Activated CD4-positive, alpha-beta T cell treated with anti-CD3 and anti-CD28 coated beads for 36 hours (primary cell): ENCODE measurements at regions of chr14 and their contacts with region 1.

Region 1: GRCh38 chr14:62126879-62127478 is 364.8 kb downstream of the SNAPC1 start:
- DNase-seq: no peak
- ATAC-seq: peak; percentile 61
- H3K4me3 Mint-ChIP-seq: no peak overlapping the region
- H3K27ac Mint-ChIP-seq: no peak overlapping the region
- H3K4me1 Mint-ChIP-seq: no peaks in the 10 kb centered on the region
- H3K27me3 Mint-ChIP-seq: peaks cover 30% of the 10 kb centered on the region

Region 2: GRCh38 chr14:61296719-61297502 is 830.1 kb before region 1 on chr14:
- CTCF ChIA-PET with region 1: no interaction called
- POLR2A ChIA-PET with region 1: no interaction called
- intact Hi-C with region 1: loop called in 1 of 2 experiments (anchors 10 kb)
- DNase-seq: no peak
- ATAC-seq: peak; percentile 67
- H3K4me3 Mint-ChIP-seq: no peak overlapping the region
- H3K27ac Mint-ChIP-seq: peak overlapping the region; percentile 29
- H3K4me1 Mint-ChIP-seq: peaks cover 54% of the 10 kb centered on the region
- H3K27me3 Mint-ChIP-seq: no peaks in the 10 kb centered on the region

Region 3: GRCh38 chr14:61860294-61860918 is 266.6 kb before region 1 on chr14:
- CTCF ChIA-PET with region 1: interaction called, 25 read pairs
- POLR2A ChIA-PET with region 1: no interaction called
- intact Hi-C with region 1: loop called in 1 of 2 experiments (anchors 1 kb)
- DNase-seq: peak; percentile 86
- ATAC-seq: peak; percentile 100
- H3K4me3 Mint-ChIP-seq: no peak overlapping the region
- H3K27ac Mint-ChIP-seq: no peak overlapping the region
- H3K4me1 Mint-ChIP-seq: peaks cover 5% of the 10 kb centered on the region
- H3K27me3 Mint-ChIP-seq: peaks cover 14% of the 10 kb centered on the region

Region 4: DNA sequence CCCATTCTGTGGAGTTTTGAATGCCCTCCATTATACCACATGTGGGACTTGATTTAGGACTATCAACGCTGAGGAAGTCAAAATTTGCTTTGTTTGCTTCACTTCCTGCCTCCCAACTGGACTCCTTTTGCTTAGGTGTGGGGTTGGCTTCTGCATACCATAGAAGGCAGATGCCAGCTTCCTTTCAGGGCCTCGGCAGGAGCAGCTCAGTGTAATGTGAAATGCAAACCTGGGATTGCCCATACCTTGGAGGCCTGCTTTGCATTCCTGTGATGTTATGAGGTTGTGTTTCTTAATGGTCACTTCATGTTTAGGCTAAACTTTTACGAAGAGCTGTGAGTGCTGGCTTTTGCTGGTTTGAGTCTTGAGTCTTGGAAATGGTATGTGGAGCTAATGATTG is 222.8 kb before region 1 on chr14:
- CTCF ChIA-PET with region 1: interaction called, 10 read pairs
- POLR2A ChIA-PET with region 1: no interaction called
- intact Hi-C with region 1: no loop called
- DNase-seq: no peak
- ATAC-seq: no peak
- H3K4me3 Mint-ChIP-seq: no peak overlapping the region
- H3K27ac Mint-ChIP-seq: no peak overlapping the region
- H3K4me1 Mint-ChIP-seq: no peaks in the 10 kb centered on the region
- H3K27me3 Mint-ChIP-seq: peaks cover 4% of the 10 kb centered on the region